Caco-2 (cell line): ENCODE measurements at regions of chr17 and their contacts with region 1.

Region 1: DNA sequence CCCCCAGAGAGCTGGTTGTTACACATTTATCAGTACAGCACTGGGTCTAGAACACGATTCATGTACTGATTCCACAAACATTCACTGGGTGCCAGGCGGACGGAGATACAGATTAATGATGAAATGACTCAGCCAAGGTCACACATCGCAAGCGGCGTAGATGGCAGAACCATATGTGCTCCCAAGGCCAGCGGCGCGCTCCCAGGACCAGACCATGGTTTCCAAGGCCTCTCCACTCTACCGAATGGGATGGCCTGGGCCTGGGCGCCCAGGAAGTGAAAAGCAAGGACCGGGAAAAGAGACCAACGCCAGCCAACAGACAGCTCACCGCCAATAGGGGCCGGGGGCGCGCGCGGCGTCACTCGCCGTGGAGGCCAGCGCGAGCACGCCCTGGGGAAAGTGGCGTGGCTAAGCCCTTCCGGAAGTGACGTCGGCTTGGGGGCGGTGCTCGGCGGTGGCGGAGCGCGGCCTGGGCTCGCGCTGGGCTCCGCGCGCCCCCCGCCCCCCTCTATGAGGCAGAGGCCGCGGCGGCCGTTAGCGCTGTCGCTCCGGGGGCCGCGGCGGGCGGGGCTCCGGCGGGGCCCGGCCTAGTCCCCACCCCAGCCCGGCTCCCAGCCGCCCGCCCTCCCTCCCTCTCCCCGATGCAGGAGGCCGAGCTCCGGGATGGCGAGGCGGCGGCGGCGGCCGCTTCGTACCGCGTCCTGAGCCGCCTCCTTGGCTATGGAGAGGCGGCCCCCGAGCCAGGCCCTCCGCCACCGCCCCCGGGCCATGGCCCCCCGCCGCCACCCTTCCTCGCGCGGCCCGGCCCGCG is at the start of gene SOCS7:
- DNase-seq: peak; percentile 94 to 97
- H3K4me3 ChIP-seq: peak within 1 kb of the TSS; percentile 71
- H3K4me3 Mint-ChIP-seq: peak within 1 kb of the TSS; percentile 92
- H3K27ac Mint-ChIP-seq: peak within 1 kb of the TSS; percentile 92
- H3K4me1 ChIP-seq: peaks cover 14% of the 10 kb centered on the region
- H3K4me1 Mint-ChIP-seq: peaks cover 30% of the 10 kb centered on the region
- H3K27me3 ChIP-seq: no peaks in the 10 kb centered on the region
- H3K27me3 Mint-ChIP-seq: no peaks in the 10 kb centered on the region
- CTCF ChIP-seq: no peak
- total RNA-seq, gene SOCS7: 29.2 and 32.4 TPM in 2 replicates

Region 2: DNA sequence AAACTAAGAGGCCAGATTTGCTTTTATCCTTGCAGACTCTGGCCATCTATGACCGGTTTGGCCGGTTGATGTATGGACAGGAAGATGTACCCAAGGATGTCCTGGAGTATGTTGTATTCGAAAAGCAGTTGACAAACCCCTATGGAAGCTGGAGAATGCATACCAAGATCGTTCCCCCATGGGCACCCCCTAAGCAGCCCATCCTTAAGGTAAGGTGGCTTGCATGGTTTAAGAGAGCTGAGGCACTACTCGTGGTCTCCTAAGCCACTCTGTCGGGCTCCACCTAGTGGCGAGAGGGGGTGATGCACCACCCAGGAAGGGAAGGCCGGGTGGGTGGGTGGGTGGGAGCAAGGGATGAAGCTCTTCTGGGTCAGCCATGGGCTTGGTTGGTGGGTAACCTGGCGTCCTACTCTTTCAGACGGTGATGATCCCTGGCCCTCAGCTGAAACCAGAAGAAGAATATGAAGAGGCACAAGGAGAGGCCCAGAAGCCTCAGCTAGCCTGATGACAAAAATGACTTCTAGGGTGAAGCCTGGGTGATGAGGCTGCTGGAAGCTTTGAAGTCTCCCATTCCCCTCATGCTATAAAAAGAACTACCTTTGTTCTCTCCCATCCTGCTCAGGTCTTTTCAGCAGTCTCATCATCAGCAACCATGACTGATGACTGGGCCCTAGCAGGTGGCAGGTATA is 29.4 kb before region 1 on chr17:
- CTCF ChIA-PET with region 1: interaction called, 11 read pairs
- POLR2A ChIA-PET with region 1: interaction called, 5 read pairs
- intact Hi-C with region 1: no loop called
- DNase-seq: peak; percentile 74 to 82
- H3K4me3 ChIP-seq: no peak overlapping the region
- H3K4me3 Mint-ChIP-seq: no peak overlapping the region
- H3K27ac Mint-ChIP-seq: no peak overlapping the region
- H3K4me1 ChIP-seq: peaks cover 37% of the 10 kb centered on the region
- H3K4me1 Mint-ChIP-seq: peaks cover 25% of the 10 kb centered on the region
- H3K27me3 ChIP-seq: no peaks in the 10 kb centered on the region
- H3K27me3 Mint-ChIP-seq: no peaks in the 10 kb centered on the region
- CTCF ChIP-seq: peak; percentile 83 to 85

Region 3: DNA sequence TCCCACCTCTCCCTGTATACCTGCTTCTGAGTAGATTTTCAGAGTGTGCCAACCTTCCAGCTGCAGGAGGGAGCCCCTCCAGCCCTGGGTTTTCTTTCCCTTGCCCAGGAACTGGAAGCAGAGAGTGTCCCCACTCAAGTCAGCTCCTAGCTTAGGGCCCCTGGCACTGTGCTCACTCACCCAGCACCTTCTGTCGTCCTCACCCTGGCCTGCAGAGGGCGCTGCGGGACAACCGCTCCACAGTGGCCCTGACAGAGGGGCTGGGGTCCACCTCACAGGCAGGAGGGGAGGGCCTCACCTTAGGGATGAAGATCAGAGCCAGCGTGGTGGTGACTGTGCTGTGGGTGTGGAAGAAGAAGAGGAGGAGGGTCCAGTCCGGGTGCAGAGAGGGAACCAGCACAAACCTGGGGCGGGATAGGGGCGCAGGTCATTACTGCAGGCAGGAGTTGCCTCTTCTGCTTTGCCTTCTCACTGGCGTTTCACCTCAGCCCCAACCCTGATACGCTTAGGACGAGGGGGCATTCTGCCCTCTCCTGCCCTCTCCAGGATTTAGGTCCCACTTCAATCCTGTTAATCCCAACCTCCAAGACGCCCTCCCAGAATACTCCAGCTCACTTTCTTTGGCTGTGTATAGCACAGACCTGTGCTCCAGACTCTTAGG is 17.9 kb before region 1 on chr17:
- CTCF ChIA-PET with region 1: interaction called, 12 read pairs
- POLR2A ChIA-PET with region 1: no interaction called
- intact Hi-C with region 1: no loop called
- DNase-seq: peak; percentile 72 to 80
- H3K4me3 ChIP-seq: no peak overlapping the region
- H3K4me3 Mint-ChIP-seq: no peak overlapping the region
- H3K27ac Mint-ChIP-seq: no peak overlapping the region
- H3K4me1 ChIP-seq: no peaks in the 10 kb centered on the region
- H3K4me1 Mint-ChIP-seq: no peaks in the 10 kb centered on the region
- H3K27me3 ChIP-seq: no peaks in the 10 kb centered on the region
- H3K27me3 Mint-ChIP-seq: peaks cover under 1% of the 10 kb centered on the region
- CTCF ChIP-seq: peak; percentile 73 to 85

Region 4: DNA sequence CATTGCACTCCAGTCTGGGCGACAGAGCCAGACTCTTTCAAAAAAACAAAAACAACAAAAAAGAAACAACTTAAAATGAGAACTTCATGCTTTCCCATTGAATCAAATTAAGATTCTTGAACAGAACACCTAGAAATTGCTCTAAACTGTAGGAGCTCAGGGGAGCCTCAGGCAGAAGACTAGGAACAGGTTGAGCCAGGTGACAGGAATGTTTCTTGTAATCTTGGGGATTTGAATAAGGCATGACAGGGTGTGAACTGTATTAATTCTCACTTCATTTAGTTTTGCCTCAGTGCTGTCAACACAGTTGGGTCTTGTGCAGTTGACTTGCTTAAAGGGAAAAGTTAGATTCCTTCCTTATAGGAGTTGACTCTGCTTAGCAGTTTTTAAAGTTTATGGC is 27.8 kb after region 1 on chr17:
- CTCF ChIA-PET with region 1: interaction called, 22 read pairs
- POLR2A ChIA-PET with region 1: interaction called, 4 read pairs
- intact Hi-C with region 1: no loop called
- DNase-seq: no peak
- H3K4me3 ChIP-seq: no peak overlapping the region
- H3K4me3 Mint-ChIP-seq: no peak overlapping the region
- H3K27ac Mint-ChIP-seq: no peak overlapping the region
- H3K4me1 ChIP-seq: no peaks in the 10 kb centered on the region
- H3K4me1 Mint-ChIP-seq: no peaks in the 10 kb centered on the region
- H3K27me3 ChIP-seq: no peaks in the 10 kb centered on the region
- H3K27me3 Mint-ChIP-seq: no peaks in the 10 kb centered on the region
- CTCF ChIP-seq: no peak

Region 5: GRCh38 chr17:38403491-38403890 is 51.9 kb after region 1 on chr17:
- CTCF ChIA-PET with region 1: interaction called, 8 read pairs
- POLR2A ChIA-PET with region 1: no interaction called
- intact Hi-C with region 1: loop called (anchors 1 kb)
- DNase-seq: peak in 1 of 2 experiments; percentile 22
- H3K4me3 ChIP-seq: no peak overlapping the region
- H3K4me3 Mint-ChIP-seq: no peak overlapping the region
- H3K27ac Mint-ChIP-seq: no peak overlapping the region
- H3K4me1 ChIP-seq: no peaks in the 10 kb centered on the region
- H3K4me1 Mint-ChIP-seq: no peaks in the 10 kb centered on the region
- H3K27me3 ChIP-seq: no peaks in the 10 kb centered on the region
- H3K27me3 Mint-ChIP-seq: no peaks in the 10 kb centered on the region
- CTCF ChIP-seq: no peak

Region 6: GRCh38 chr17:38415250-38416194 is 63.9 kb after region 1 on chr17:
- CTCF ChIA-PET with region 1: interaction called, 183 read pairs
- POLR2A ChIA-PET with region 1: interaction called, 23 read pairs
- intact Hi-C with region 1: loop called (anchors 1 kb)
- DNase-seq: peak; percentile 89 to 91
- H3K4me3 ChIP-seq: peak overlapping the region; percentile 44
- H3K4me3 Mint-ChIP-seq: peak overlapping the region; percentile 82
- H3K27ac Mint-ChIP-seq: peak overlapping the region; percentile 98
- H3K4me1 ChIP-seq: peaks cover 23% of the 10 kb centered on the region
- H3K4me1 Mint-ChIP-seq: peaks cover 14% of the 10 kb centered on the region
- H3K27me3 ChIP-seq: no peaks in the 10 kb centered on the region
- H3K27me3 Mint-ChIP-seq: no peaks in the 10 kb centered on the region
- CTCF ChIP-seq: no peak

Region 7: DNA sequence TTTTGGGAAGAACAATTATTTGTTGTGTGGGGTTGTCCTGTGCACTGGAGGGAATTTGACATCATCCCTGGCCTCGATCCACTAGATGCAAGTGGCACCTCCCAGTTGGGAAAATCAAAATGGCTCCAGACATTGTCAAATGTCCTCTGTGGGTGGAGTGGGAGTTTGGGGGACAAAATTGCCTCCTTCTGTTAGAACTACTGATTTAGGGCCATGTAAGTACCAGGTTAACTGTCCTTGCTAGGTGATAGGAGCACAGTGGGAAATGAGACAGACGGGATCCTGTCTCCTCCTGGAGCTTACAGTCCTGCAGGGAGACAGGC is 133.5 kb after region 1 on chr17:
- CTCF ChIA-PET with region 1: no interaction called
- POLR2A ChIA-PET with region 1: no interaction called
- intact Hi-C with region 1: loop called (anchors 10 kb)
- DNase-seq: no peak
- H3K4me3 ChIP-seq: no peak overlapping the region
- H3K4me3 Mint-ChIP-seq: no peak overlapping the region
- H3K27ac Mint-ChIP-seq: no peak overlapping the region
- H3K4me1 ChIP-seq: no peaks in the 10 kb centered on the region
- H3K4me1 Mint-ChIP-seq: peaks cover 21% of the 10 kb centered on the region
- H3K27me3 ChIP-seq: no peaks in the 10 kb centered on the region
- H3K27me3 Mint-ChIP-seq: no peaks in the 10 kb centered on the region
- CTCF ChIP-seq: no peak